PC-3 (cell line): ENCODE measurements at regions of chr3 and their contacts with region 1.

Region 1: GRCh38 chr3:29612536-29612935 is 331.7 kb downstream of the RBMS3 start:
- DNase-seq: no peak
- ATAC-seq: no peak
- H3K4me3 ChIP-seq: no peak overlapping the region
- H3K27ac ChIP-seq: no peak overlapping the region
- H3K4me1 ChIP-seq: peaks cover 33% of the 10 kb centered on the region
- H3K27me3 ChIP-seq: no peaks in the 10 kb centered on the region
- CTCF ChIP-seq: no peak

Region 2: GRCh38 chr3:29202378-29202777 is 410.2 kb before region 1 on chr3:
- CTCF ChIA-PET with region 1: no interaction called
- POLR2A ChIA-PET with region 1: no interaction called
- intact Hi-C with region 1: loop called (anchors 5 kb)
- DNase-seq: peak; percentile 84
- ATAC-seq: peak; percentile 88
- H3K4me3 ChIP-seq: no peak overlapping the region
- H3K27ac ChIP-seq: peak overlapping the region; percentile 21
- H3K4me1 ChIP-seq: peaks cover 24% of the 10 kb centered on the region
- H3K27me3 ChIP-seq: no peaks in the 10 kb centered on the region
- CTCF ChIP-seq: no peak

Region 3: DNA sequence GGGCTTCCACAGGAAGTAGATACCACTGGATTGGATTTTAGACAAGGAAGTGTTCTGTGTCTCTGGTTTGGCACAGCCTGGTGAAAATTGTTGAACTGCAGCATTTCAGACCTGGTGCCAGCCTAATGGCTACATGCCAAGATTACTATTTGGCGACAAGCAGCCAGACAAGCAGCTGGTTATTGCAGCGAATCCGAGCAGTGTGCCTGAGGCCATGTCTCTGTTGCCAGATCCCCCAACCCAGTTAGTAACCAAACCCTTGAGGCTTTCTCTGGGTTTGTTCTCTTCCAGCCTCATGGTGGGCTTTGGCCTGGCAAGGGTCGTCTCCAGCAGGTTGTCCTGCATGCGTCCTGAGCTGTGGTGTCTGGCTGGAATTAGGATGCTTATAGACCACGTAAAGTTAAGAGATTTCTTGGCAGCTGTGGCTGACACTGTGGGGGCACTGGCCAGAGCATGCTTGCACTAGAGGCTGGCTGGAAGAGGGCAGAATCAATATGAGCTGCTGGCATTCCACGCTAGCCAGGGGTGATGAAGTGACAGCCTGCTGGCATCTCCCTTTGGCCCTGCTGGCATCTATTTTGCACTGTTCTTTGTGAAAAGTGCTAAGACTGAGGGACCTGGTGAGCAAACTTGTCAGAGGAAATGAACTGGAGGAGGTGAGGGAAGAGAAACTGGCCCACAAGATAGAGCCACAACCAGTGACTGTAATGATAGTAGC is 159.1 kb before region 1 on chr3:
- CTCF ChIA-PET with region 1: no interaction called
- POLR2A ChIA-PET with region 1: no interaction called
- intact Hi-C with region 1: no loop called
- DNase-seq: peak; percentile 63
- ATAC-seq: no peak; the same call in 1 of the 2 replicates
- H3K4me3 ChIP-seq: no peak overlapping the region
- H3K27ac ChIP-seq: no peak overlapping the region
- H3K4me1 ChIP-seq: peaks cover 9% of the 10 kb centered on the region
- H3K27me3 ChIP-seq: no peaks in the 10 kb centered on the region
- CTCF ChIP-seq: no peak